Heart right ventricle (tissue), 16 donors: ENCODE measurements at regions of chr3 and their contacts with region 1.

Region 1: GRCh38 chr3:10344147-10344943 is 23.4 kb upstream of the SEC13 start:
- DNase-seq: peak; percentile 35 to 36
- ATAC-seq: peak in 5 of 8 donors; percentile 31 to 60 (median 44)
- H3K4me3 ChIP-seq: no peak overlapping the region
- H3K27ac ChIP-seq: no peak overlapping the region
- H3K4me1 ChIP-seq: no peaks in the 10 kb centered on the region
- H3K27me3 ChIP-seq: peaks cover 0 to 10% (median 0%) of the 10 kb centered on the region in 7 donors
- CTCF ChIP-seq: peak; percentile 77 to 94 (median 91)

Region 2: DNA sequence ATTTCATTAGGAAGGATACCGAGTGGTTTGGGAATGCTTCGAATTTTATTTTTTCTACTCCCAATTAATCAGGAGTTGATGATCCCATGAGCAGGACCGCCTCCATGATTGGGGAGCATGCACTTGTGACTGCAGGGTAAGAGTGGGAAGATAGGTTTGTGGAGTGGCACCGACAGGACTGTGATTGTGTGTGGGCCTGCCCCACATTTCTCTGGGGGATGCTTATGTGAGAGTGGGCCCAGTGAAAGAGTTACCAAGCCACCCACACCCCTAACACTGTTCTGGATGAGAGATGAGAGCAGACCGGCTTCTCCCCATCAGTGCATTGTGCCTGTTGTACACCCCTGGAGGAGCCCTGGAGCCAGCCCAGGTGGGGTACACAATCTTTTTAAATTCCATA is 867.4 kb before region 1 on chr3:
- intact Hi-C with region 1: no loop called
- DNase-seq: no peak
- ATAC-seq: peak in 1 of 8 donors; percentile 14
- H3K4me3 ChIP-seq: no peak overlapping the region
- H3K27ac ChIP-seq: no peak overlapping the region
- H3K4me1 ChIP-seq: no peaks in the 10 kb centered on the region
- H3K27me3 ChIP-seq: no peaks in the 10 kb centered on the region
- CTCF ChIP-seq: no peak

Region 3: DNA sequence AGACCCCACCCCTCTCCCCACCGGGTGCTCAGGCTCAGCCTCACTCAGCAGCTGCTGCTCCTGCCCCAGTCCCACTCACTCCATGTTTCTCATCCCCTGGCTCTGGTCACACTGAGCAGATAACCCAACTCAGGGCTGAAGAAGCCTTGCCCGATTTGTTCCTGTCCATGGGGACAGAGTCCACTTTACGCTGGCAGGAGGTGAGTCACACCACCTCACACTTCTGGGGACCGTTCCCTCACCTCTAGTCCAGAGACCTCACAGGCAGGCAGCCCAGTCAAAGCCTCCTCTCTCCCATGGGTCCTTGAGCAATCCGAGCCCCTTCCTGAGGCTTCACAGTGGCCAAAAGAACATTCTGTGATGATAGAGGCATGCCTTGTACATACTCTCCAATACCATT is 465.6 kb before region 1 on chr3:
- intact Hi-C with region 1: no loop called
- DNase-seq: no peak
- ATAC-seq: peak in 1 of 8 donors; percentile 45
- H3K4me3 ChIP-seq: no peak overlapping the region
- H3K27ac ChIP-seq: no peak overlapping the region
- H3K4me1 ChIP-seq: no peaks in the 10 kb centered on the region
- H3K27me3 ChIP-seq: no peaks in the 10 kb centered on the region
- CTCF ChIP-seq: no peak

Region 4: DNA sequence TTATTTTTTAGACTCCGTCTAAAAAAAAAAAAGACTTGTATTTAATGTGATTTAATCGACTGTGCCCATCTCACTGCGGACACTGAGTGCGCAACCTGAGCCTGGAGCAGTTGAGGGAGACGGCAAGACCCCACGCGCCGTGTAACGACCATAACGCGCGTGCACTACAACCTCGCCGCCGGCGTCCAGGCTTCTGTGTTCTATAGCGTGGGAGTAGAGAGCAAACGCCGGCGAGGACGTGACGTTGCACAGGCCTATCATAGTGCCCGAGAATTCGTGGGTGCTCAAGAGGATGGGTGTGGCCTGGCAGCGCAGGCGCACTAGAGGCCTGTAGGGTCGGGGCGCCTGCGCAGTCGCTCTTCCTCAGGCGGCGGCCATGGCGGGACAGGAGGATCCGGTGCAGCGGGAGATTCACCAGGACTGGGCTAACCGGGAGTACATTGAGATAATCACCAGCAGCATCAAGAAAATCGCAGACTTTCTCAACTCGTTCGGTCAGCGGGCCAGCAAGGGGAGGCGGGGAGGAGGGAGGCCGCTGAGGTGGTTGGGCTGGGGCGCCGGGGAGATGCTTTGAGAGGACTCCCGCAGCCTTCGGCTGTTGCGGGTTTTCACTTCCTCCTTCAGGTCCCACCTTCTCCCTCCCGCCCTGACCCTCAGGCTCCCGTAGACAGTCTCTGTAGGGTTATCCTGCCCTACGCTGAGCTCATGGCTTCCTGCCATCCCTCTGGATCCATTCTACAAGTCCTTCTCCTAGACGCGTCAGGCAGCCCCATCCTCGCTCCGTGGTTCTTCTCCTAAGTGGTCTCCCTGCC is 228.8 kb before region 1 on chr3 and contains the start of gene BRK1:
- intact Hi-C with region 1: no loop called
- DNase-seq: peak; percentile 94 to 95
- ATAC-seq: peak; percentile 100
- H3K4me3 ChIP-seq: peak within 1 kb of the TSS; percentile 77 to 97 (median 84)
- H3K27ac ChIP-seq: peak within 1 kb of the TSS in 9 of 10 donors; percentile 66 to 90 (median 83)
- H3K4me1 ChIP-seq: peaks cover 3 to 44% (median 31%) of the 10 kb centered on the region in 9 donors
- H3K27me3 ChIP-seq: no peaks in the 10 kb centered on the region
- CTCF ChIP-seq: no peak
- total RNA-seq, gene BRK1: 80.3 to 101 (median 94.8) TPM

Region 5: GRCh38 chr3:10398341-10398740 is 54.0 kb after region 1 on chr3:
- intact Hi-C with region 1: no loop called
- DNase-seq: no peak
- ATAC-seq: no peak
- H3K4me3 ChIP-seq: no peak overlapping the region
- H3K27ac ChIP-seq: no peak overlapping the region
- H3K4me1 ChIP-seq: peaks cover 0 to 6% (median 0%) of the 10 kb centered on the region in 9 donors
- H3K27me3 ChIP-seq: peaks cover 0 to 4% (median 0%) of the 10 kb centered on the region in 7 donors
- CTCF ChIP-seq: no peak

Region 6: DNA sequence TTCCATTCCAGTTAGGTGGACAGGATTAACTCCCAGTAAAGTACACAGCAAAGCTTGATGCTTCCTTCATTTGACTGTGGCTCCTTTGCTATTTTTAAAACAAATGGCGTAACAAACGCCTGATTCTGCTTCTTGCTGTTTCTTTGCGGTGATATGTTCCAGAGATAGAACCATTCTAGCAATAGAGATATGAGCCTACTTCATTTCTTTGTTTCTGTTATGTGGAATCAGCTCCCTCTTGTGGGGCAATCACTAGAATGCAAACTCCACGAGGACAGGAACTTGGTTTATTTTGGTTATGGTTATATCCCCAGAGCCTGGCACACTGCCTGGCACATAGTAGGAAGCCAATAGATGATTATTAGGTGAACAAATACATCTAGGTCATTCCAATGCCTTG is 349.1 kb after region 1 on chr3:
- intact Hi-C with region 1: loop called in 8 of 10 experiments (anchors 1 to 10 kb)
- DNase-seq: no peak
- ATAC-seq: peak in 1 of 8 donors; percentile 34
- H3K4me3 ChIP-seq: no peak overlapping the region
- H3K27ac ChIP-seq: no peak overlapping the region
- H3K4me1 ChIP-seq: no peaks in the 10 kb centered on the region
- H3K27me3 ChIP-seq: peaks cover 0 to 26% (median 15%) of the 10 kb centered on the region in 7 donors
- CTCF ChIP-seq: peak in 7 of 9 donors; percentile 21 to 44 (median 36)

Region 7: DNA sequence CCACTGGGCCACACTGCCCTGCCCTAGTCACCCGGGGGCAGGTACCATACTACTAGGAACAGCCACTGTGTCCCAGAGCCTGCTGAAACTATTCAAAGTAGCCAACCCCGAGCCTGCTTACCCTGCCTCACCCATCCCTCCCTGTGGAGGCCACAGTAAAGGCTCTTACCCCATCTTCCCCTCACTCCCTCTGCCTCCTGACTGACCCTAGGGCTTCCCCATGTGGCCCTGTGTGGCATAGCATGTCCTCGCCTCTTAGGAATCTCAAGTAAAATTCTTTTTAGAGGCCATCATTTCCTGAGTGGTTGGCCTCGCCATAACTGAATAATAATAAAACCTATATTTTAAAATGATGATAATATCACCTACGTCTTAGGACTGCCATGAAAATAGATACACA is 359.5 kb after region 1 on chr3:
- intact Hi-C with region 1: loop called in 5 of 10 experiments (anchors 5 to 10 kb)
- DNase-seq: no peak
- ATAC-seq: no peak
- H3K4me3 ChIP-seq: no peak overlapping the region
- H3K27ac ChIP-seq: no peak overlapping the region
- H3K4me1 ChIP-seq: peaks cover 0 to 7% (median 0%) of the 10 kb centered on the region in 9 donors
- H3K27me3 ChIP-seq: peaks cover 20 to 91% (median 83%) of the 10 kb centered on the region in 7 donors
- CTCF ChIP-seq: peak in 2 of 9 donors; percentile 9 to 13

Region 8: GRCh38 chr3:10738688-10739372 is 394.5 kb after region 1 on chr3:
- intact Hi-C with region 1: loop called (anchors 2 to 10 kb)
- DNase-seq: peak; percentile 57 to 64
- ATAC-seq: peak; percentile 58 to 92 (median 82)
- H3K4me3 ChIP-seq: peak overlapping the region in 7 of 10 donors; percentile 21 to 45 (median 39)
- H3K27ac ChIP-seq: no peak overlapping the region
- H3K4me1 ChIP-seq: peaks cover 0 to 4% (median 0%) of the 10 kb centered on the region in 9 donors
- H3K27me3 ChIP-seq: peaks cover 0 to 74% (median 57%) of the 10 kb centered on the region in 7 donors
- CTCF ChIP-seq: peak; percentile 66 to 89 (median 85)